GM12878 (cell line): ENCODE measurements at regions of chr1 and their contacts with region 1.

Region 1: GRCh38 chr1:18902523-18903290 is at the start of gene ALDH4A1:
- DNase-seq: peak; percentile 90
- ATAC-seq: peak; percentile 99
- H3K4me3 ChIP-seq: peak within 1 kb of the TSS; percentile 86
- H3K27ac ChIP-seq: peak within 1 kb of the TSS; percentile 91
- H3K4me1 ChIP-seq: peaks cover 10% of the 10 kb centered on the region; the same call in 1 of the 2 replicates
- H3K27me3 ChIP-seq: no peaks in the 10 kb centered on the region
- CTCF ChIP-seq: 0 out of 6 replicates have a peak, but pooled peaks of 1 of the 3 experiments have one; percentile 4
- EP300 ChIP-seq: no peak
- POLR2A ChIP-seq: peak; percentile 79
- RAD21 ChIP-seq: no peak
- polyA plus RNA-seq, gene ALDH4A1: 0.06 to 0.53 TPM

Region 2: DNA sequence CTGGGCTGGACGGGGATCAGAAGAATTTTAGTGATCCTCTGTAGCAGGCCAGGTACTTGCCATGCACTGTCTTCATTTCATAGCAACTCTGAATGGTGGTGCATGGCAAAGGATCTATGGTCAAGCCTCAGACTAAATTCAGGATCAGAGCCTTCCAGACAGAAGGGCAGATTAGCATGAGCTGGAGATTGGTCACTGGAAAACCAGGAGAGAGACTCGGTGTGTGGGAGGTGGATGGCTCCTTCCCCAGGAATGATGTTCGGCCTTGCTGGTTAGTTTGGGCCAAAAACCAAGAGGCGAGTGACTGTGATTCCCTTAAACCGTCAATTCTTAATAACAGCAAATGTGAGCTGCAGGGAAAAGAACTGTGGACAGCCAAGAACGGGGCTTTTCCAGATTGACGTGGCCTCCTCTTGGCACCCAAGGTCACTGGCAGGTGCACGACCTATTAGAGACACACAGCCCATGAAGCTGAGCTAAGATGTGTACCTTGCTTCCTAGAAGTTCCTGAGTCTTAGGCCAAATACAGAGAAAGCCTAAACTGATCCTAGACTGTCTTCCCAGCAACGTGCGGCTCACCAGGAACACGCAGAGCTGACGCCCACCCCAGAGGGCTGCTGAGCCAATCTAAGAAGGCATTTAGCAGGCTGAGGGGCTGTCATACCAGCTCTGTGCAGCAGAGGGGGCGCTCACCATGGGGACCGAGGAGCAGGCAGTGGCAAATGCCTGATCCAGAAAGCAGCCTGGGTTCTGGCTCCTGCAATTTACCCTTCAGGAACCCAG is 18.9 kb before region 1 on chr1:
- CTCF ChIA-PET with region 1: interaction called, 12 read pairs
- POLR2A ChIA-PET with region 1: no interaction called
- RAD21 ChIA-PET with region 1: interaction called, 9 read pairs
- SMC1A ChIA-PET with region 1: interaction called, 7 read pairs
- in situ Hi-C with region 1: no loop called
- intact Hi-C with region 1: no loop called
- DNase-seq: no peak
- ATAC-seq: peak; percentile 96
- H3K4me3 ChIP-seq: no peak overlapping the region
- H3K27ac ChIP-seq: no peak overlapping the region
- H3K4me1 ChIP-seq: no peaks in the 10 kb centered on the region
- H3K27me3 ChIP-seq: no peaks in the 10 kb centered on the region
- CTCF ChIP-seq: peak; percentile 84 to 94 (median 94)
- EP300 ChIP-seq: no peak
- POLR2A ChIP-seq: no peak
- RAD21 ChIP-seq: peak; percentile 82

Region 3: DNA sequence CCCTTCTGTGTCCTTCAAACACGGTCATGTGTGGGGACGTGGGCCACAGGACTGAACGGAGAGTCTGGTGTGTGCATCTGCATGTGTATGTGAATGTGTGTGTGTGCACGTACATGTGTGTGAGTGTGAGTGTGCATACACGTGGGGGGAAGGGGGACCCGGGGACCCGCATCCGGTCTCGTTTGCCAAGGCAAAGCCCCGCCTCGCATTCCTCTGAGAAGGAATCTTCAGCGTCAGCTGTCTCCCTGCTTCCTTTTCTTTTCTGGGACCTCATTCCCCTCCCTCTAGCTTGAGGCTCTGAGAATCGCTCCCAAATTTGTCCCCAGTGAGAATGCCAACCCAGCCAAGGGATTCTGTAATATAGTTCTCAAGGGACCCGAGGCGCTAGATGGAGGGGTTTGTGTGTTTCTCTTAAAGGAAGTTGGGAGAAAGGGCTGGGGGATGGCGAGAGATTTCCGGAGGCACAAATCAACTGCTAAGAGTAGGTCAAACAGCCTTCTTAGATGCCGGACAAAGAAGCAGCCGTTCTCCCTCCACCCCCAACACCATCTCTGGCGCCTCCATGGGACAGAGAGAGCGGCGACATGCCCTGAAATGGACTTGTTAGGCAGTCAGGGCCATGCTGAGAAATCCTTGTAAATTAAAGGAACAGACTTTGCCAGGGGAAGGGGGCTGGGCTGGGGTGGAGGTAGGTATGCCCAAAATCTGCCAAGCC is 47.1 kb after region 1 on chr1:
- CTCF ChIA-PET with region 1: interaction called, 42 read pairs
- POLR2A ChIA-PET with region 1: interaction called, 6 read pairs
- RAD21 ChIA-PET with region 1: interaction called, 11 read pairs
- SMC1A ChIA-PET with region 1: interaction called, 8 read pairs
- in situ Hi-C with region 1: no loop called
- intact Hi-C with region 1: no loop called
- DNase-seq: no peak
- ATAC-seq: peak; percentile 7; the same call in 1 of the 3 replicates
- H3K4me3 ChIP-seq: peak overlapping the region; percentile 73
- H3K27ac ChIP-seq: peak overlapping the region; percentile 99
- H3K4me1 ChIP-seq: peaks cover 64% of the 10 kb centered on the region
- H3K27me3 ChIP-seq: no peaks in the 10 kb centered on the region
- CTCF ChIP-seq: peak; percentile 28 to 46 (median 41); a peak in 5 of 6 replicates
- EP300 ChIP-seq: no peak
- POLR2A ChIP-seq: no peak
- RAD21 ChIP-seq: peak; percentile 40

Region 4: GRCh38 chr1:18972531-18972930 is 69.8 kb after region 1 on chr1:
- CTCF ChIA-PET with region 1: interaction called, 86 read pairs
- POLR2A ChIA-PET with region 1: no interaction called
- RAD21 ChIA-PET with region 1: interaction called, 9 read pairs
- SMC1A ChIA-PET with region 1: interaction called, 13 read pairs
- in situ Hi-C with region 1: no loop called
- intact Hi-C with region 1: no loop called
- DNase-seq: no peak
- ATAC-seq: no peak
- H3K4me3 ChIP-seq: no peak overlapping the region
- H3K27ac ChIP-seq: no peak overlapping the region
- H3K4me1 ChIP-seq: no peaks in the 10 kb centered on the region
- H3K27me3 ChIP-seq: peaks cover 0 to 3% of the 10 kb centered on the region in 2 experiments; a peak in 1 of 4 replicates
- CTCF ChIP-seq: peak; percentile 20 to 39 (median 20); a peak in 4 of 6 replicates
- EP300 ChIP-seq: no peak
- POLR2A ChIP-seq: no peak
- RAD21 ChIP-seq: peak; percentile 55

Region 5: GRCh38 chr1:19096036-19096833 is 193.5 kb after region 1 on chr1:
- CTCF ChIA-PET with region 1: interaction called, 18 read pairs
- POLR2A ChIA-PET with region 1: no interaction called
- RAD21 ChIA-PET with region 1: no interaction called
- SMC1A ChIA-PET with region 1: interaction called, 4 read pairs
- in situ Hi-C with region 1: loop called (anchors 5 kb)
- intact Hi-C with region 1: no loop called
- DNase-seq: no peak
- ATAC-seq: 0 out of 3 replicates have a peak, but pooled peaks have one; percentile 25
- H3K4me3 ChIP-seq: no peak overlapping the region
- H3K27ac ChIP-seq: no peak overlapping the region
- H3K4me1 ChIP-seq: no peaks in the 10 kb centered on the region
- H3K27me3 ChIP-seq: no peaks in the 10 kb centered on the region
- CTCF ChIP-seq: peak in 2 of 3 experiments; percentile 33 to 35; a peak in 2 of 6 replicates
- EP300 ChIP-seq: no peak
- POLR2A ChIP-seq: no peak
- RAD21 ChIP-seq: peak; percentile 25; the same call in 1 of the 2 replicates

Region 6: DNA sequence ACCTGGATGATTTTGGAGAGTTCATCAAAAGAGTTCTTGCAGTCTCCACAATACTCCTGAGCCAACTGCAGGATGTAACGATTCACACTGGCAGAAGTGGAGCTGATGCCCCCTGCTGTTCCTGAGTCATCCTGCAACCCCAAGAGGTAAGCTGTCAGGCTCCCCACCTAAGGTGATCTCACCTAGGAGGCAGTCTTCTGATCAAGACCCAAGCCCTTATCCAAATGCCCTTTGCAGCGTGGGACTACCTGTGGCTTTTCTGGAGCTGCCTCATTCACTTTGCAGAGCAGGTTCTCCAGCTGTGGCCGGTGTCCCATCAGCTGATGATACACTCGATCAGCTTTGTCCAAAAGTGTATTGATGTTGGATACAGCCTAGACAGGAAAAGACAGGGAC is 211.0 kb after region 1 on chr1:
- CTCF ChIA-PET with region 1: interaction called, 27 read pairs
- POLR2A ChIA-PET with region 1: no interaction called
- RAD21 ChIA-PET with region 1: interaction called, 4 read pairs
- SMC1A ChIA-PET with region 1: interaction called, 14 read pairs
- in situ Hi-C with region 1: no loop called
- intact Hi-C with region 1: no loop called
- DNase-seq: no peak
- ATAC-seq: peak; percentile 85
- H3K4me3 ChIP-seq: no peak overlapping the region
- H3K27ac ChIP-seq: no peak overlapping the region
- H3K4me1 ChIP-seq: no peaks in the 10 kb centered on the region
- H3K27me3 ChIP-seq: no peaks in the 10 kb centered on the region
- CTCF ChIP-seq: peak; percentile 52 to 54 (median 53); a peak in 5 of 6 replicates
- EP300 ChIP-seq: no peak
- POLR2A ChIP-seq: no peak
- RAD21 ChIP-seq: peak; percentile 39; the same call in 1 of the 2 replicates